HAP-1 (cell line): ENCODE measurements at regions of chr2 and their contacts with region 1.

Region 1: GRCh38 chr2:195672668-195673067 is 15.6 kb downstream of the SLC39A10 start:
- DNase-seq: no peak
- H3K4me3 ChIP-seq: no peak overlapping the region
- H3K4me1 ChIP-seq: no peaks in the 10 kb centered on the region
- H3K27me3 ChIP-seq: no peaks in the 10 kb centered on the region

Region 2: DNA sequence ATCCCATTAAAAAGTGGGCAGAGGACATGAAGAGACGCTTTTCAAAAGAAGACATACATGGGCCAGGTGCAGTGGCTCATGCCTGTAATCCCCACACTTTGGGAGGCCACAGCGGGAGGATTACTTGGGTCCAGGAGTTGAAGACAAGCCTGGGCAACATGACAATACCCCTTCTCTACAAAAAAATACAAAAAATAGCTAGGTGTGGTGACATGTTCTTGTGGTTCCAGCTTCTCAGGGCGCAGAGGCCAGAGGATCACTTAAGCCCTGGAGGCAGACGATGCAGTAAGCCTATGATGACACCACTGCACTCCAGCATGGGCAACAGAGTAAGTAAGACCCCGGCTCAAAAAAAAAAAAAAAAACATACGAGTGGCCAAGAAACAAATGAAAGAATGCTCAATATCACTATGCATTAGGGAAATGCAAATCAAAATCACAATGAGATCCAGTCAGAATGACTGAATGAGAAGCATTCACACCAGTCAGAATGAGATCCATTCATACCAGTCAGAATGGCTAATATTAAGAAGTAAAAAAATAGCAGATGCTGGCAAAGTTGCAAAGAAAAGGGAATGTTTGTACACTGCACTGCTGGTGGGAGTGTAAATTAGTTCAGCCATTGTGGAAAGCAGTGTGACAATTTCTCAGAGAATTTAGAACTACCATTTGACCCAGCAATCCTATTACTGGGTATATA is 565.8 kb before region 1 on chr2:
- in situ Hi-C with region 1: no loop called
- DNase-seq: no peak
- H3K4me3 ChIP-seq: no peak overlapping the region
- H3K4me1 ChIP-seq: no peaks in the 10 kb centered on the region
- H3K27me3 ChIP-seq: no peaks in the 10 kb centered on the region

Region 3: GRCh38 chr2:195945061-195945460 is 272.4 kb after region 1 on chr2:
- in situ Hi-C with region 1: loop called (anchors 10 kb)
- DNase-seq: no peak
- H3K4me3 ChIP-seq: no peak overlapping the region
- H3K4me1 ChIP-seq: no peaks in the 10 kb centered on the region
- H3K27me3 ChIP-seq: no peaks in the 10 kb centered on the region